Common myeloid progenitor, CD34-positive (primary cell): ENCODE measurements at regions of chr6 and their contacts with region 1.

Region 1: GRCh38 chr6:31834434-31835198 is 7.1 kb downstream of the HSPA1B start:
- DNase-seq: peak; percentile 80 to 86 (median 82)
- H3K4me3 ChIP-seq: peak overlapping the region; percentile 72 to 99 (median 92)
- H3K27ac ChIP-seq: peak overlapping the region; percentile 98 to 99
- H3K4me1 ChIP-seq: peaks cover 36 to 70% (median 61%) of the 10 kb centered on the region in 4 experiments
- H3K27me3 ChIP-seq: no peaks in the 10 kb centered on the region

Region 2: DNA sequence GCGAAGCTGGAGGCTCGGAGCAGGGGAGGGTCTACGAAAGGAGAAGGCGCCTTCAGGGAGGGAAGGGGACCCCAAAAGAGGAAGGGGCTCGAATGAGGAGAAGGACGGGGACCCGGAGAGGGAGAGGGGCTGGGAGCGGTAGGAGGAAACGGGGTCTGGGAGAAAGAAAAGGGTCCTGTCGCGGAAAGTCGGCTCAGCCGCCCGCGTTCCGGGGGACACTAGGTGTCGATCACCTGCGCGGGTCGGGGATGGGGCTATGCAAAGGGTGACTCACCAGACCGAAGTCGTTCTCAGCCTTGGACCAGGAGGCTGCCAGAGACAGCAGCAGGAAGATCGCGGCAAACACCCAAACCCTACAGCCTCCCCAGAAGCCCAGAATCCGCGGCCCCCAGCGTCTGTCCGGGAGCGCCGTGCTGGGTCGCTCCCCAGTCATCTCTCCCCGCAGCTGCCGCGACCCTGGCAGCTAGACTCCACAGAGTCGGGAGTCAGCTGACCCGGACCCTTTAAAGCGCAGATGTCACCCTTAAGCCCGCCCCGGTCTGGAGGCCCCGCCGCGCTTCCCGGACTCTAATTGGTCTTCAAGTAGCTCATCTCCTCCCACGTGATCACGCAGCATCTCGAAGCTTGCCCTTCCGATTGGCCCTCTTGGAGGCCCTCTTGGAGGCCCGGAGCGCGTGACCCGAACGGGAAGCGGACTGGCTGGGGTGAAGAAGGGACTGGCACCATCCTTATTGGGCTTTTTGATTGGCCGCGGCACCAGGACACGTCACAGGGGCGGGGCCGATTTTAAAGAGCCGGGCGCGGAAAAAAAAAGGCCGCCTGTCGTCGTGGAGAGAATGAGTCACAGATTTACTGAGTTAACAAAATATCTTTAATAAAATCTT is 28.0 kb after region 1 on chr6 and contains the start of gene NEU1:
- CTCF ChIA-PET with region 1: interaction called, 7 read pairs
- POLR2A ChIA-PET with region 1: interaction called, 18 read pairs
- DNase-seq: peak; percentile 100
- H3K4me3 ChIP-seq: peak within 1 kb of the TSS; percentile 69 to 96 (median 87)
- H3K27ac ChIP-seq: peak within 1 kb of the TSS; percentile 66 to 89
- H3K4me1 ChIP-seq: peaks cover 0 to 29% (median 19%) of the 10 kb centered on the region in 4 experiments
- H3K27me3 ChIP-seq: no peaks in the 10 kb centered on the region

Region 3: DNA sequence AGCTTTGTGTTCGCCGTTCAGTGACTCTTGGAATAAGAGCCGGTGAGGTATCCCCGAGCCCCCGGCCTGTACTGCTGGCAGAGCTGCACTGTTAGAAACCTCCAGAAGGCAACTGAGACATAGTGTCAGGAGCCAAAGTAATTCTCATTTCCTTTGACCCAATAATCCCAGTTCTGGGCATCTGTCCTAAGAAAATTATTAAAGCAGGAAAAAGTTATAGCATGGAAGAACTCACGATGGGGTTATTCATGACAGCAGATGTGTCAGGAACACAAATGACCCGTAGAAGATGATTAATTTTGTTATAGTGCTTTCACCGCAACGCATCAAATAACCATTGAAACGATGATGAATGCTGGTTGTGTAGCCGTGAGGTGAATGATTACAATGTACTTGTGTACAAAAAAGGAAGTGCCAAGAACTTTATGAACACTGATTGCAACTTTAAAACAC is 223.9 kb after region 1 on chr6:
- CTCF ChIA-PET with region 1: no interaction called
- POLR2A ChIA-PET with region 1: no interaction called
- DNase-seq: no peak
- H3K4me3 ChIP-seq: no peak overlapping the region
- H3K27ac ChIP-seq: no peak overlapping the region
- H3K4me1 ChIP-seq: no peaks in the 10 kb centered on the region
- H3K27me3 ChIP-seq: peaks cover 0 to 2% (median 0%) of the 10 kb centered on the region in 5 experiments